ENCODE measurements at regions of chr22 and their contacts with region 1.

Region 1: GRCh38 chr22:32745251-32745995 is 56.1 kb upstream of the TIMP3 start:
- DNase-seq: peak; percentile 81
- ATAC-seq: peak; percentile 84

Region 2: DNA sequence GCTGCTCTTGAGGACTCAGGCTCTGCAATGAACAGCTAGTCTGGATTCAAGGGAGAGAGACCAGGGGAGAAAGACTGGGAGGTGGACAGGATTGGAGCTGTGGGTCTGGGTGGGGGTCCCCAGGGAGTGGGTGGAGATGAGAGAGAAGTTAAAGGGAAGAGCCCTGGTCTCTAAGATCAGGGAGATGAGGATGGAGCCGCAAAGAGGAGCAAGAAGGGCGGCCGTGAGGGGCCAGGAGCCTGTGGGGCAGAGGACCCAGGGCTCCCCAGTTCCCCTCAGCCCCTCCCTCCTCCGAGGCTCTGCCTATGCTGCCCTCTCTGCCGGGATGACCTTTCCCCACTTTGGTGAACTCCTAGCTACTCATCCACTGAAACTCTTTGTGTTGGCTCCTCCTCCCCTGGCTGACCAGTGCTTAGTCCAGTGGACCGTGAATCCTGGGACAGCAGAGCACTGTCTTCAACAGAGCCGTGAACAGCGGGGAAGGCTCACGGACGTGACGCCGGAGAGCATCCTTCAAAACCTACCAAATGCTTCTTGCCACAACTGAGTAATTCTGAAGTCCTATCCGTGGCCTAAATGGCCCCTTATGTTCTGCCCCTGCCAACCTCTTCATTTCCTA is 404.2 kb before region 1 on chr22:
- intact Hi-C with region 1: no loop called
- DNase-seq: no peak
- ATAC-seq: no peak

Region 3: DNA sequence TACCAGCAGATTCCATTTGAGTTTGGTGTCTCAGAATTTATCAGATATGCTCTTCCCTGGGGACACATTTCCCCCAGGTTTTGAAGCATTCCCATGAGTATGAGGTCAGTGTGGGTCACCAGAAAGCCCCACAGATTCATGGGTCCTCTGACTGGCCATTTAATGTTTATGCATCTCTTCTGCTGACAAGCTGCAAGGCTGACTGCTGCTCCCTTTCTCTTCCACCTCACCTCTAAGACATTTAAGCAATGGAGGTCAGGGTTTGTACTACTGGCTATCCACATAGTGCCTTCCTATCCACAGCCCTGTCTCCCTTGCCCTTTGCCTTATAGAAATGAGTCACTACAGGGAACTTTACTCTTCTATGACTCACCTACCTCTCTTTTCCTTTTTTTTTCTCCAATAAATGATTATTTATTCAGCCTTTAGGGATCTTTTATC is 50.0 kb before region 1 on chr22:
- intact Hi-C with region 1: loop called (anchors 5 kb)
- DNase-seq: no peak
- ATAC-seq: no peak

Region 4: DNA sequence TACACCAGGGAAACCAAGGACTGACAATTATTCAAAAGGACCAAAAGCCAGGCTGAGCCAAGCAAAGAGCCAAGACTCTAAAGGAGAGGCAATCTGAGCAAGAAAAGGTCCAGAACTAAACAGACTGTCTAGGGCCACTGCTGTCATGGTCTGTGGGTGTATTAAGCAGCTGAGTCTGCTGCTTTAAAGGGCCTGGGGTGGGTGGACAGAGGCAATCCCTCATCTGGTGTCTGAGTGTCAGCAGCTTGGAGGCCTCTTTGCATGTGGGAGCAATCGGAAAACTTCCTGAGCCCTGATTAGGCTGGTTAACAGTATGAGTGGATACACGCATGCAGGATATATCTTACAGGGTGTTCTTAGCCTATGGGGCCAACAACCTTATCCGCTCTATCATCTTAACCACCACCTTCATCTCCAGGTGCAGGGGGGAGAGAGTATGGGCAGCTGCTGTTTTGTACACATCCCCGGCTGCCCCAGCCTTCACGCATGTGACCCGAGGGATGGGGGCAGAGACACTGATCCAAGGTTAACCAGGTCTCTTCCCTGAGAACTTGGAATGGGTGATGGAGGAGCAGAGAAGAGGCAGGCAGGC is 11.4 kb before region 1 on chr22:
- intact Hi-C with region 1: no loop called
- DNase-seq: no peak
- ATAC-seq: no peak